Esophagus squamous epithelium (tissue), 5 donors: ENCODE measurements at regions of chr10 and their contacts with region 1.

Region 1: GRCh38 chr10:86899670-86900276 is 57.6 kb downstream of the MMRN2 start:
- DNase-seq: no peak
- H3K4me3 ChIP-seq: no peak overlapping the region
- H3K27ac ChIP-seq: peak overlapping the region in 1 of 4 donors; percentile 32
- H3K4me1 ChIP-seq: peaks cover 0 to 21% (median 3%) of the 10 kb centered on the region in 3 donors
- H3K27me3 ChIP-seq: no peaks in the 10 kb centered on the region
- CTCF ChIP-seq: peak; percentile 52 to 78 (median 67)
- POLR2A ChIP-seq: no peak

Region 2: GRCh38 chr10:86693721-86694369 is 205.9 kb before region 1 on chr10:
- intact Hi-C with region 1: loop called (anchors 5 kb)
- DNase-seq: no peak
- H3K4me3 ChIP-seq: no peak overlapping the region
- H3K27ac ChIP-seq: peak overlapping the region in 2 of 4 donors; percentile 25 to 26
- H3K4me1 ChIP-seq: peaks cover 0 to 17% (median 8%) of the 10 kb centered on the region in 3 donors
- H3K27me3 ChIP-seq: peaks cover 0 to 26% (median 0%) of the 10 kb centered on the region in 4 donors
- CTCF ChIP-seq: peak; percentile 24 to 67 (median 62)
- POLR2A ChIP-seq: no peak